Activated T-helper 1 cell treated with anti-CD3 and anti-CD28 coated beads, Interleukin-12 subunit alpha, Interleukin-12 subunit beta, Interleukin-2, Interleukin-4 antibody, amounts not matched to agents 30 ng/mL and 10 ng/mL and 1 ng/mL, durations not matched to agents 14 hours and 24 hours and 36 hours (primary cell): ENCODE measurements at regions of chr10 and their contacts with region 1.

Region 1: DNA sequence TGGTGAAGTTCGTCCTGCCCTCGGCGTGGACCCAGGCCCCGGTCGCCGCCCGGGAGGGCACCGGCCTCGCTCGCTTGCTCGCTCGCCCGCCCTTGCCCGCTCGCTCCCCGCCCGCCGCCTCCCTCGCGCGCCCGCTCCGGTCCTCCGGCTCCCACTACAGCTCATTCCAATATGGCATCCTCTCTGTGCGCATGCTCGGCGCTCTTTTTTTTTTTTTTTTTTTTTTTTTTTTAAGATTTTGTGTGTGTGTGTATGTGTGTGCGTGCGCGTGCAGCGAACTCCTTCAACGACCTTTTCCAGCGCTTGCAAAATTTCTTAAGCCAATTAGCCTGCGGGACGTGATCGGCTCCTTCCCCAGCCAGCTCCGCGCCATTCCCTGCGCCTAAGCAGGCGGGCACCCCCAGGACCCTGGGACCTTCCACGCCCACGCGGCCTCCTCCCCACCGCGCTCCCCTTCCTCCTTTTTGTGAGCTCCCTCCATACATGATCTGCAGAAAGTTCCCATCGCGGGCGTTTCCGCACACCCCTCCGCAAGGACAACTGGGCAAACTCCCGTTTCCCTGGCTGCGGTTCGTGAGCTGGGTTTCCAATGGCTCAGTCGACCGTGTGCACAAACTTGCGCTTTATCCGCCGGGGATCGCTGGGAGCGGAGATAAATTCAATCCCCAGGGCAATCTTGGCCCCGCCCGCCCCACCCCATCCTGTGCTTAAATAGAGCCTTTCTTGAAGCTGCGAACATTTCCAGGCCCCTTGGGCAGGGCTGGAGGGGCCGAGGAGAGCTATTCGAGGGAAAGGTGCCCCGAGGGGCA is at the start of gene SFMBT2:
- DNase-seq: peak; percentile 64
- H3K4me3 Mint-ChIP-seq: peak within 1 kb of the TSS; percentile 96
- H3K27ac Mint-ChIP-seq: peak within 1 kb of the TSS; percentile 96
- H3K4me1 Mint-ChIP-seq: peaks cover 38% of the 10 kb centered on the region
- H3K27me3 Mint-ChIP-seq: peaks cover 35% of the 10 kb centered on the region
- total RNA-seq, gene SFMBT2: 38.3 and 39.1 TPM in 2 replicates

Region 2: DNA sequence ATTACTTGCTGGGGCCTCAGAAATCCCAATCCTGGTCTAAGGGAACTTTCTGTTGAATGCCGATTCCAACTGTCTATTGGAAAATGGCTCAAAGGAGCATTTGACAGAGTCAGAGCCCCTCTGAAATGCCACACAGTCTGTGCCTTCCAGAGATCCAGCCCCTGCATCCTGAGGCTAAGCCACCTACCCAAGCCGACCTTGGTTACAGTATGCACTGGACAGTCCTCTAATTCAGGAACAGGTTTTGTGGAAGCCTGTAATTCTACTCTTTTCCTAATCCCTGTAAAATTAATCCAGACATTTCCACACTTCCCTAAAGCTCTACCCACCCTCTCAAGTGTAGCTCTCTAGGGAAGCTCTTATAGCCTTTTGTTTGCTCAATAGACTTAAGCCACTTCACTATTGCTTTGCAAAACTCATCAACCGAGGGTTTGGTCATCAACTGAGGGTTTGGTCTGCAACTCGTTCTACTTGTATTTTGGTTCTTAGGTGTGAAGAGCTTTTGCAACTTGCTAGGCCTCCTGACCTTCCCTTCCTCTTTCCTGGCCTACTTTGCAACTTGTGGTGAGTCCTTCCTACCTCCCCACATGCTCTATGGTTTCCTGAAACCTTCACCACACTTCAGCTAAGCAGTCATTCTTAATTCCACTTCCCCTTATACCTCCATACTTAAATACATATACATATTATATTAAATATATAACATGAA is 365.0 kb before region 1 on chr10:
- intact Hi-C with region 1: loop called (anchors 10 kb)
- DNase-seq: peak; percentile 28
- H3K4me3 Mint-ChIP-seq: peak overlapping the region; percentile 2
- H3K27ac Mint-ChIP-seq: peak overlapping the region; percentile 79
- H3K4me1 Mint-ChIP-seq: peaks cover 53% of the 10 kb centered on the region
- H3K27me3 Mint-ChIP-seq: peaks cover 2% of the 10 kb centered on the region

Region 3: DNA sequence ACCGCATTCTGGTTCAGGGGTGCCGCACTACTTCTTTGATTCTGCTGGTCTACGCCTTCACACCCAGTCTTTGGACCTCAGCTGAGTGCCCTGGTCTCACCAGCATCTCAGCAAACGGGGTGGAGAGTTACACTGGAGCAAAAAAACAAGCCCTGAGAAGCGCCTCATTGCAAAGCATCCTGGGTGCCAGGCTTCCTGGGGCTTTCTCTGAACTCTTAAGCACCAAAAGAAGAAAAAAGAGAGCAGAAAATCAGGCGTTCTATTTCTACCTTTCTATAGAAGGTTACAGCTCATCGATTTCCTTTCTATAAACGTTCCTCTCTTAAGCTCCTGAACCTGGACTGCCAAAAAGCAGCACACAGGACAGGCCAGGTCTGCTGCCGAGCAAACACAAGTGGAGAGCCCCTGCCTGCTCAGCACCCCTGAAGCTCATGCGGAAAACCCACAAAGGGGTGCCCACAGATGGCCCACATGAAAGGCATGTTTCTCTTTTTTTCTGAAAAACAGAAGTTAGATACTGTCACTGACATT is 218.2 kb before region 1 on chr10:
- intact Hi-C with region 1: loop called (anchors 1 kb)
- DNase-seq: peak; percentile 68
- H3K4me3 Mint-ChIP-seq: peak overlapping the region; percentile 76
- H3K27ac Mint-ChIP-seq: peak overlapping the region; percentile 97
- H3K4me1 Mint-ChIP-seq: peaks cover 73% of the 10 kb centered on the region
- H3K27me3 Mint-ChIP-seq: peaks cover 1% of the 10 kb centered on the region

Region 4: DNA sequence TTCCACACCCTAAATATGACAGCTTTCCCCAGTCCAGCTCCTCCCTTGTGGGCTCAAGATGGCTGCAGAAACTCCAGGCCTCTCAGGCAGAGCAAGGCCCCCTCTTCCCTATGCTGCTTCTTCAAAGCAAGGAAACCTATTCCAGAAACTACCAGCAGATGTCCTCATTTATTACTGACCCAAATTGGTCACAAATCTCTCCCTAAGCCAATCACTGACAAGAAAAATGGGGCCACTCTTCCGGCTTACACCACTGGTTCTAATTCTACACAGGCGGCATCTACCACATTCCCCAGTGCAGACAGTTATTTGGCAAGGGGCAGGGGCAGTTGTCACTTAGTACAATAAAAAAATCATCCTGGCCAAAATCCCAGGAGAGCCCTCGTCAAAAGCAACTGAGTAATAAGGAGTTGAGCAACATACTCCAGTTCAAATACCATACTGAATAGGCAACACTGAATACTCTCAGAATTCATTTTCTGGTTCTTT is 150.6 kb before region 1 on chr10:
- intact Hi-C with region 1: loop called (anchors 1 kb)
- DNase-seq: no peak
- H3K4me3 Mint-ChIP-seq: peak overlapping the region; percentile 49
- H3K27ac Mint-ChIP-seq: peak overlapping the region; percentile 75
- H3K4me1 Mint-ChIP-seq: peaks cover 59% of the 10 kb centered on the region
- H3K27me3 Mint-ChIP-seq: no peaks in the 10 kb centered on the region

Region 5: DNA sequence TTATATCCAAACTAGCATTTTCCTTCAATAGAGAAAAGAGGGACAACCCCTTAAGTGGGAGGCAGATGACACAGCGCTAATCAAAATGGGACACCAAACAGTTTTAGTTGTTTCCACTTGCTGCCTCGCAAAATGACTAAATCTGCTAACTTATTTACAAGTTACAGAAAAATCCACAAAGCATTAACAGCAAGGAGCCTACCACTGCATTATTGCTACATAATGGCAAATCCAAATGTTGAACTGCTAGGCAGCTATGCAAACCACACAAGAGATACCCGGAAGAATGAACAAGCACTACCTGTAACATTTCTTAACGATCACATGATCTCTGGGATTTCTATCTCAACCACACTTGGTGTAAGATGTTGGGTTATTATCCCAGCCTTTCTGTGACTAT is 96.9 kb before region 1 on chr10:
- intact Hi-C with region 1: loop called (anchors 1 kb)
- DNase-seq: no peak
- H3K4me3 Mint-ChIP-seq: no peak overlapping the region
- H3K27ac Mint-ChIP-seq: peak overlapping the region; percentile 89
- H3K4me1 Mint-ChIP-seq: peaks cover 45% of the 10 kb centered on the region
- H3K27me3 Mint-ChIP-seq: no peaks in the 10 kb centered on the region

Region 6: GRCh38 chr10:7484456-7485243 is 73.6 kb after region 1 on chr10:
- intact Hi-C with region 1: loop called (anchors 1 kb)
- DNase-seq: peak; percentile 72
- H3K4me3 Mint-ChIP-seq: peak overlapping the region; percentile 51
- H3K27ac Mint-ChIP-seq: peak overlapping the region; percentile 93
- H3K4me1 Mint-ChIP-seq: peaks cover 88% of the 10 kb centered on the region
- H3K27me3 Mint-ChIP-seq: peaks cover 2% of the 10 kb centered on the region